Ascending aorta (tissue), 2 donors: ENCODE measurements at regions of chr19 and their contacts with region 1.

Region 1: DNA sequence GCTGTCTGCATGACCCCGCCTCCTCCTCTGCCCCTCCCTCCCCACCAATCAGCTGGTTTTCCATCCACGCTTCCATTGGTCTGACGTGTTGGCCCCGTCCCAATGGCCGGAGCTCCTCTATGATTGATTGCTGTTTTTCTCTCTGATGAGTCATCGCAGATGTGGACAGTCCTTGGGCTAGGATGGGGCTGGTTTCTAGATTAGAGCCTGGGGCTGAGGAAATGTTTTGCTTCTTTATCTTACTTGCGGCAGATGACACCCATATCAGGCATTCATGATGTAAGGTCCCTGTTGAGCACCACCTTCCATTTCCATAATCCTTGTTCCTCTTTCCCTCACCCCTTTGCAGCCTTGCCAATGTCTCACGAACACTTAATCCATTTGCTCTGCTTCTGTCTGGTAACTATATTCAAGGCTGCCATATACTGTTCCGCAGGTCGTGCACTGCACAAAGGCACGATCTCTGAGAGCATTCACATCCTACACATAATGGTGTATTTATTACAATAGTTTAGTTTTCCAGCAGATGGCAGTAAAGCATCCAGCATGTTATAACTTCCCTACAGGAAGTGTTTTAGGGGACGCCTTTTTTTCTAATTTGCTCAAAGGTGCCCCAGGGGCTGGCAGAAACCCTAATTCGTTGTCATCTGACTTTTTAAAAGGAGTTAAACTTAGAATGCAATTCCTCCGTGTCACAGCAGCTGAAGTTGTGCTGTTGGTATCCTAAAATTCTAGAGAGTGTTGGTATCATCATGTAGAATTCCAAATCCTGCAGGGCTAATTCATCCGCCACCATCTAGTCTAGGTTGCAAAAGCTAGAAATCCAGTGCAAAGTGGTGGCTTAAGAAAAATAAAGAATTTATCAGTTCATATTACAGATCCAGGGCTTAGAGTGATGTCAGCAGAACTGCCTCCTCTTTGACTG is 73.5 kb downstream of the MAP4K1 start:
- DNase-seq: peak; percentile 77 to 80
- H3K4me3 ChIP-seq: peak overlapping the region in 1 of 2 donors; percentile 40
- H3K27ac ChIP-seq: peak overlapping the region in 1 of 2 donors; percentile 12
- H3K4me1 ChIP-seq: peaks cover 0 to 12% of the 10 kb centered on the region in 2 donors
- H3K27me3 ChIP-seq: no peaks in the 10 kb centered on the region
- CTCF ChIP-seq: peak; percentile 46 to 67 (median 55)

Region 2: GRCh38 chr19:38618590-38619360 is 74.5 kb after region 1 on chr19 and contains the start of gene EIF3K:
- intact Hi-C with region 1: loop called (anchors 5 kb)
- DNase-seq: peak; percentile 97 to 99
- H3K4me3 ChIP-seq: peak within 1 kb of the TSS; percentile 75 to 91
- H3K27ac ChIP-seq: peak within 1 kb of the TSS; percentile 87 to 88
- H3K4me1 ChIP-seq: peaks cover 9 to 10% of the 10 kb centered on the region in 2 donors
- H3K27me3 ChIP-seq: no peaks in the 10 kb centered on the region
- CTCF ChIP-seq: no peak
- total RNA-seq, gene EIF3K: 696 TPM

Region 3: DNA sequence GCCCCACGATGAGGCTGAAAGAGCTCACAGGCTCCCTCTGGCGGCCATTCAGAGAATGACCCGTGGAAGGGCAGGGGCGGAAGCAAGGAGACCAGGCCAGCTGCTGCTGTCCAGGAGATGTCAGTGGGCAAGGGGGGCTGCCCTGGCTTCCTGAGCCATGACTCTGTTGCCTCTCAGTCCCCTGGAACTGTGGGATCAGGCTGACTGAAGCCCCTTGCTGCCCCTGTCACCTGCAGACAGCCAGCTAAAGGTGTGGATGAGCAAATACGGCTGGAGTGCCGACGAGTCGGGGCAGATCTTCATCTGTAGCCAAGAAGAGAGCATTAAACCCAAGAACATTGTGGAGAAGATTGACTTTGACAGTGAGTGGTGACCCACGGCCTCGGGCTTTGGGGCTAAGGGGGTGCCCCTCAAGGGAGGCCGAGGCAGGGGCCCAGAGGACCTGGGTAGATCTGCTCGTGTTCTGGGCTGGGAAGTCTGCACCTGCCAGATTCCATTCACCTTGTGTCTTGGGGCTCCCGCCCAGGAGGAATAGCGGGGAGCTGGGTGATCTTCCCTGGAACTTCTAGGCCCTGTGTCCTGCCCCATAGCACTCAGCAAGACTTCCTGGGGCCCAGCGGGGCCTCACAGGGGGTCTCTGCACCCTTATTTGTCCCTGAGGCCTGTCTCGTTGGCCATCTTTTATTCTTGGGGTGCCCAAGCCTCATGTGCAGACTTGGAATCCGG is 90.6 kb after region 1 on chr19:
- intact Hi-C with region 1: loop called (anchors 5 kb)
- DNase-seq: peak in 1 of 2 donors; percentile 85
- H3K4me3 ChIP-seq: no peak overlapping the region
- H3K27ac ChIP-seq: no peak overlapping the region
- H3K4me1 ChIP-seq: peaks cover 0 to 3% of the 10 kb centered on the region in 2 donors
- H3K27me3 ChIP-seq: no peaks in the 10 kb centered on the region
- CTCF ChIP-seq: peak; percentile 87 to 96 (median 89)

Region 4: DNA sequence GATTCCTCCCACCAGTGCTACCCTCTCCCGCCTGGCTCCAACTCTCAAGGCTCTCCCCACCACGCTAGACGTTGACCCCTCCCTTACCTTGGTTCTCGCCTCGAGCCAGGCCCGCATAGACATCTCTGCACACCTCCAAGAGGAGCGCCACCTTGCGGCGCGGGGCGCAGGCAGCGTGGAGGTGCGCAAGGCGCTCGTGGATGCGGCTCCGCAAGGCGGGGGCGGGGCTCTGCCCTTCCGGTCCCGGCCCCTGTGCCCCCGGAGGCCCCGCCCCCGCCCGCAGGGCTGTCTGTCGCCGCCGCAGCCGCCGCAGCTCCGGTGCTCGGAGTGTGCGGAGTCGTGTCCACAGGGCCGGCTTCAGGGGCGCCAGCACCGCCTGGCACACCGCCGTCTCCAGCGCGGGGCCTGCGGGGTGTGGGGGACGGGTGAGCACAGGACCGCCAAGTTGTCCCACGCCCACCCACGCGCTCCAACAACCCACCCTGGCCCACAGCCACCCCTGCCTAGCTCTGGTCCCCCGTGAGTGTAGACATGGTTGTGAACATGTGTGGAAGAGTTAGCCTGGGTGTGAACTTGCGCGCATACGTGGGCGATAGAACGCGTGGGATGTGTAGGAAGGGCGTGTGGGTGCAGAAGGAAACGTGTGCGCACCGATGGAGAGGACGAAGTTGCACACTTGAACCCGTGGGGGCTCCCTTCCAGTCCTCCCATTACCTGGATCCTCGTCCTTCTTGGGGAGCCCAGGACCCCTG is 325.7 kb after region 1 on chr19:
- intact Hi-C with region 1: loop called (anchors 1 kb)
- DNase-seq: peak in 1 of 2 donors; percentile 93
- H3K4me3 ChIP-seq: peak overlapping the region; percentile 40 to 77
- H3K27ac ChIP-seq: no peak overlapping the region
- H3K4me1 ChIP-seq: peaks cover 5 to 9% of the 10 kb centered on the region in 2 donors
- H3K27me3 ChIP-seq: no peaks in the 10 kb centered on the region
- CTCF ChIP-seq: peak; percentile 81 to 89 (median 86)

Region 5: DNA sequence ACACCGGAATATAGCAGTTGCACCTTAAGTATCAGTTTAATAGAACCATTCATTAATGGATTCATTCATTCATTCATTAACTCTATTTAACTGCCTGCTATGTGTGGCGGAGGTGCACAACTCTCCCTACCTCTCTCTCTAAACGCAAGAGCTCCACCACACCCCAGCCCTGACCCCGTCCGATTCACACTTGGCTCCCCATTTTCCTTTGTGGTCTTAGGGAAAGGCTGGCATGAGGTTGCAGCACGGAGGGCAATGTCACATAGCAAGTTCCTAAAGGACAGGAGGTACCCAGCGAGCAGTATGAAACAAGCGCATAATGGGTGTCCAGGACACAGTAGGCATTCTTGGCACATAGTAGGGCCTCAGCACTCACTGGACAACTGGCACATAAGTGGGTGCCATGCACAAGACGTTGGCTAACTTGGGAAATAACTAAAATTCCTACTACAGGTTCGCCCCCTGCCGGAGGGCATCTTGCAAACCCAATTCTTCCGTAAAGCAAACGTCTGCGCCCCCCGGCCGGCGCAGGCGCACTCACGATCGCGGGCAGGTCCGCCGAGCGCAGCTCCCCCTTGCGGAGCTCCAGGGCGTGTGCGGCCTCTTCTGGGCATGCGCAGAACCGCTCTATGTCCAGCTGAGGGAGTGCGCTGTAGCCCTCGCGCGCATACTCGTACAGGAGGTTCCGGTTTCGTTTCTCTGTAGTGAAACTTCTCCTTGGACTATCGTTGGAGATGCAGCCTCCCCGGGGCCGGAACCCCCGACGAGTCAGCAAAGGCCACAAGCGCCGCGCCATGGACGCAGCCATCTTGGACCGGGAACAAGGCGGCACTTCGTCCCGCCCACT is 385.9 kb after region 1 on chr19 and contains the start of gene SARS2:
- intact Hi-C with region 1: loop called (anchors 2 kb)
- DNase-seq: peak; percentile 62 to 97
- H3K4me3 ChIP-seq: peak within 1 kb of the TSS; percentile 83 to 93
- H3K27ac ChIP-seq: peak within 1 kb of the TSS; percentile 70 to 77
- H3K4me1 ChIP-seq: peaks cover 9 to 14% of the 10 kb centered on the region in 2 donors
- H3K27me3 ChIP-seq: no peaks in the 10 kb centered on the region
- CTCF ChIP-seq: peak; percentile 98 to 99 (median 98)
- total RNA-seq, gene SARS2: 1.4 TPM